Activated naive CD4-positive, alpha-beta T cell treated with anti-CD3 and anti-CD28 coated beads for 36 hours (primary cell): ENCODE measurements at regions of chr6 and their contacts with region 1.

Region 1: GRCh38 chr6:90080876-90081481 is 186.7 kb downstream of the GJA10 start:
- DNase-seq: peak; percentile 94
- H3K4me3 Mint-ChIP-seq: peak overlapping the region; percentile 89
- H3K27ac Mint-ChIP-seq: peak overlapping the region; percentile 94
- H3K4me1 Mint-ChIP-seq: peaks cover 88% of the 10 kb centered on the region
- H3K27me3 Mint-ChIP-seq: no peaks in the 10 kb centered on the region

Region 2: DNA sequence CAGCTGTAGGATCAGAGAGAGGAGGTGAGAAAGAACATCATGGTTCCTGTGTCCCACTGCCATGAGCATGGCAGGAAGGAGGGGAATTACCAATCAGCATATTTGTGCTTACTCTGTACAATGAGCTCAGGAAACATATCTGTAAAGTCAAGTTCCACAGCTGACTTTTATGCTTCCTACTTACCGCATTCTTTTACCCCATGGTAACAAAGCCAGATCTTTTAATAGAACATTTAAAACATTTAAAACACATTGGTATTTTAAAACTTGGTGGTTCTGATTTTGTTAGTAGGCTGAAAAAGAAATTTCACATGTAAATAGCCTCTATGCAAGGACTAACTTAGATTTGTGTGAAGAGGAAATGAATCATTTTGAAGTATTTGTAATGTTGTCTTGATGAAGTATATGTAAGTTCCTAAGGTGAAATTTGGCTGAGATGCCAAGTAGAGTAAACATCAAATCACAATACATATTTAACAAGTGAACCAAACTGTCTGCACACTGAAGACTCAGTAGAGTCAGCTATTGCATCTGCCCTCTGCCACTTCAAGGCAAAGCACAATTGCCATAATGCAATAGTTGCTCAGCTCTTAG is 72.0 kb before region 1 on chr6:
- CTCF ChIA-PET with region 1: no interaction called
- intact Hi-C with region 1: loop called (anchors 1 kb)
- DNase-seq: peak; percentile 66
- H3K4me3 Mint-ChIP-seq: no peak overlapping the region
- H3K27ac Mint-ChIP-seq: peak overlapping the region; percentile 91
- H3K4me1 Mint-ChIP-seq: peaks cover 58% of the 10 kb centered on the region
- H3K27me3 Mint-ChIP-seq: no peaks in the 10 kb centered on the region

Region 3: GRCh38 chr6:90103056-90103800 is 22.2 kb after region 1 on chr6:
- CTCF ChIA-PET with region 1: interaction called, 14 read pairs
- intact Hi-C with region 1: loop called (anchors 1 kb)
- DNase-seq: peak; percentile 53
- H3K4me3 Mint-ChIP-seq: peak overlapping the region; percentile 45
- H3K27ac Mint-ChIP-seq: peak overlapping the region; percentile 79
- H3K4me1 Mint-ChIP-seq: peaks cover 93% of the 10 kb centered on the region
- H3K27me3 Mint-ChIP-seq: no peaks in the 10 kb centered on the region

Region 4: GRCh38 chr6:90184334-90185298 is 103.6 kb after region 1 on chr6:
- CTCF ChIA-PET with region 1: interaction called, 4 read pairs
- intact Hi-C with region 1: loop called (anchors 1 kb)
- DNase-seq: no peak
- H3K4me3 Mint-ChIP-seq: peak overlapping the region; percentile 46
- H3K27ac Mint-ChIP-seq: peak overlapping the region; percentile 66
- H3K4me1 Mint-ChIP-seq: peaks cover 75% of the 10 kb centered on the region
- H3K27me3 Mint-ChIP-seq: no peaks in the 10 kb centered on the region

Region 5: GRCh38 chr6:90256698-90257485 is 175.9 kb after region 1 on chr6:
- CTCF ChIA-PET with region 1: no interaction called
- intact Hi-C with region 1: no loop called
- DNase-seq: peak; percentile 46
- H3K4me3 Mint-ChIP-seq: no peak overlapping the region
- H3K27ac Mint-ChIP-seq: peak overlapping the region; percentile 78
- H3K4me1 Mint-ChIP-seq: peaks cover 94% of the 10 kb centered on the region
- H3K27me3 Mint-ChIP-seq: no peaks in the 10 kb centered on the region

Region 6: GRCh38 chr6:90285611-90286381 is 204.8 kb after region 1 on chr6:
- CTCF ChIA-PET with region 1: interaction called, 3 read pairs
- intact Hi-C with region 1: loop called (anchors 1 kb)
- DNase-seq: peak; percentile 68
- H3K4me3 Mint-ChIP-seq: peak overlapping the region; percentile 70
- H3K27ac Mint-ChIP-seq: peak overlapping the region; percentile 94
- H3K4me1 Mint-ChIP-seq: peaks cover 94% of the 10 kb centered on the region
- H3K27me3 Mint-ChIP-seq: no peaks in the 10 kb centered on the region

Region 7: DNA sequence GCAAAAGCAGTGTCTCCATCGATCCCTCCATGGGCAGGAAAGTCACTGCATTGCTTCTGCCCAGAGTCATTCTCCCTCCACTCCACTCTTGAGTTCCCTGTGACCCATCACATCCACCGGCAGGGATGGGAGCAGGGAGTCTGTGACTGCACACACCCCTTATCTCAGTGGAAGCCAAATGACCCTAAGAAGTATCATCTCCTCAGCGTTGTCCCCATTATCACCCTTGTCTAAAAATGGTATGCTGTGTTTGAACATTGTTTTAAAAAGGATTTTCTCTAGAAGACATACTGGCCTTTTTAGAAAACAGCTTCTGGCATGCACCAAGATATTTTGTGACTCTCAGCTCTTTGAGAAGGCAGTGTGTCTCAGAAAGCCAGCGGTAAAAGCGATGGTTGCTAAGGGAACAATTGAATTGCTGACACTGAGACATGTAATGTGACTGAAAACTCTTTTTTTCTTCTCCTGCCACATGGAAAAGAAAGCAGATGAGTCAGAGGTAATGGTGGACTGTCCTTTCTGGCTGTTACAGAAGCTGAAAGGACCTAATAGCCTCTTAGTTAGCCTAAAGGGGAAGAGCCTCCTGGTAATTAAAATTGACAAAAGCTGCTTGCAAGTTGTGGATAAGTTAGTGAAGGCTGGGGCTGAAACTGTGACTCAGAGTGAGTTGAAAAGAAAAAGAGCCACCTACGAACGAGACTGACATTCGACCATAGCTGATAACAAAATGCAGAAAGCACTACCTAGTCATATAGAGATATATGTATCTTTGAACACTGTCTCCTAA is 385.4 kb after region 1 on chr6:
- CTCF ChIA-PET with region 1: no interaction called
- intact Hi-C with region 1: loop called (anchors 2 kb)
- DNase-seq: peak; percentile 73
- H3K4me3 Mint-ChIP-seq: no peak overlapping the region
- H3K27ac Mint-ChIP-seq: peak overlapping the region; percentile 90
- H3K4me1 Mint-ChIP-seq: peaks cover 82% of the 10 kb centered on the region
- H3K27me3 Mint-ChIP-seq: no peaks in the 10 kb centered on the region